Caco-2 (cell line): ENCODE measurements at regions of chr6 and their contacts with region 1.

Region 1: DNA sequence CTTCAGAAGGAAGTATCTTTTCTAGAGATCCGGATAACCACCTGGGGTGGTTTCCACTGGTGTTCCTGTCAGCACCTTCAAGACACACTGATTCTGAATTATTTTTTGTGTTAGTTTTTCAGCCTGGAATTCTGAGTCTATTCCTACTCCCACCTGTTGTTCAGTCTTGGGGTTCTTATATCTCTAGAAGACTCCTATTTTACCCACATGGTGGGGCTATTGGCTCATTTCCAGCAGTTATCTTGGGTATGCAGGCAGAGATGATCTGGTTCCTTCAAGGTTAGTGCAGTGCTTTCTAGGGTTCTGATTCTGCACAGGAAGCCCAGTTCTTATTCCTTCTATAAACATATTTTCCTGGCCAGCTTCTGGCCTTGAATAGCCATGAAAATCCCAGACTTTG is 175.6 kb upstream of the PDE7B start:
- DNase-seq: peak in 1 of 2 experiments; percentile 62
- H3K4me3 ChIP-seq: no peak overlapping the region
- H3K4me3 Mint-ChIP-seq: no peak overlapping the region
- H3K27ac Mint-ChIP-seq: no peak overlapping the region
- H3K4me1 ChIP-seq: no peaks in the 10 kb centered on the region
- H3K4me1 Mint-ChIP-seq: no peaks in the 10 kb centered on the region
- H3K27me3 ChIP-seq: no peaks in the 10 kb centered on the region
- H3K27me3 Mint-ChIP-seq: no peaks in the 10 kb centered on the region
- CTCF ChIP-seq: peak; percentile 54 to 65

Region 2: DNA sequence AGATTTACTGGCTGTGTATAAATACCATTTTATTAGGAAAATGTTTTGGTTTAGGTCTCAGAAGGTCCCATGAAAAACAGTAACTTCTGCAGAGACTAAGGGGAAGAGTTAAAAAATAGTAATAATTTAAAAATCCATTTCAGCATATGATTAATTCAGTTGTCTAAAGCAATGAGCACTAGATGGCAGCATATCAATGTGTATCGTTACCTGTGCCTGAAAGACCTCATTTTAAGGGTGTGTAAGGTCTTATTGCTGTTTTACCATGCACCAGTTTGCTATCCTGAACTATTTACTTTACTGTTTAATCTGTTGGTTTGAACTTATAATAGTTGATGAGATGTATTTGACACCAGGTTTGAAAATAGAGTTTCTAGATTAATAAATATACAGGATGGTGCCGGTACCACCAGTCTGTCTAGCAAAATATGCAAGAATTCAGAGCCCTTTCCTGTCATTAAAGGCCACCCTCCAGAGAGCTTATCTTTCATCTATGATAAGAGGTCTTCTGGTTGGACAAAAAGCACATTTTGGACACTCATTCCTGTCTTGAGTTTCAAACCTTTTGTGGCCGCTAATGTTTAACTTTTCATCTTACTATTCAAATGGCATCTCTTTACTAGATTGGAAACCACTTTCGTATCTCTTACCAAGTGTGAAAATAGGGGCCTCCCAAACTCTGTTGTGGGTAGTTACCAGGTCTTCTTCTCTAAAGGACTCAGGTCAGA is 169.4 kb before region 1 on chr6:
- CTCF ChIA-PET with region 1: no interaction called
- POLR2A ChIA-PET with region 1: no interaction called
- intact Hi-C with region 1: loop called (anchors 2 kb)
- DNase-seq: peak in 1 of 2 experiments; percentile 35
- H3K4me3 ChIP-seq: no peak overlapping the region
- H3K4me3 Mint-ChIP-seq: peak overlapping the region; percentile 9
- H3K27ac Mint-ChIP-seq: peak overlapping the region; percentile 65
- H3K4me1 ChIP-seq: peaks cover 24% of the 10 kb centered on the region
- H3K4me1 Mint-ChIP-seq: peaks cover 18% of the 10 kb centered on the region
- H3K27me3 ChIP-seq: no peaks in the 10 kb centered on the region
- H3K27me3 Mint-ChIP-seq: no peaks in the 10 kb centered on the region
- CTCF ChIP-seq: peak; percentile 19 to 57

Region 3: GRCh38 chr6:135759831-135760230 is 84.0 kb after region 1 on chr6:
- CTCF ChIA-PET with region 1: interaction called, 3 read pairs
- POLR2A ChIA-PET with region 1: no interaction called
- intact Hi-C with region 1: loop called (anchors 1 kb)
- DNase-seq: peak in 1 of 2 experiments; percentile 21
- H3K4me3 ChIP-seq: no peak overlapping the region
- H3K4me3 Mint-ChIP-seq: no peak overlapping the region
- H3K27ac Mint-ChIP-seq: no peak overlapping the region
- H3K4me1 ChIP-seq: no peaks in the 10 kb centered on the region
- H3K4me1 Mint-ChIP-seq: no peaks in the 10 kb centered on the region
- H3K27me3 ChIP-seq: no peaks in the 10 kb centered on the region
- H3K27me3 Mint-ChIP-seq: peaks cover under 1% of the 10 kb centered on the region
- CTCF ChIP-seq: peak in 1 of 2 experiments; percentile 31

Region 4: GRCh38 chr6:135909737-135910387 is 234.0 kb after region 1 on chr6:
- CTCF ChIA-PET with region 1: interaction called, 5 read pairs
- POLR2A ChIA-PET with region 1: no interaction called
- intact Hi-C with region 1: loop called (anchors 1 kb)
- DNase-seq: peak; percentile 62 to 63
- H3K4me3 ChIP-seq: no peak overlapping the region
- H3K4me3 Mint-ChIP-seq: no peak overlapping the region
- H3K27ac Mint-ChIP-seq: no peak overlapping the region
- H3K4me1 ChIP-seq: no peaks in the 10 kb centered on the region
- H3K4me1 Mint-ChIP-seq: peaks cover 9% of the 10 kb centered on the region
- H3K27me3 ChIP-seq: no peaks in the 10 kb centered on the region
- H3K27me3 Mint-ChIP-seq: peaks cover 3% of the 10 kb centered on the region
- CTCF ChIP-seq: peak; percentile 28 to 59

Region 5: DNA sequence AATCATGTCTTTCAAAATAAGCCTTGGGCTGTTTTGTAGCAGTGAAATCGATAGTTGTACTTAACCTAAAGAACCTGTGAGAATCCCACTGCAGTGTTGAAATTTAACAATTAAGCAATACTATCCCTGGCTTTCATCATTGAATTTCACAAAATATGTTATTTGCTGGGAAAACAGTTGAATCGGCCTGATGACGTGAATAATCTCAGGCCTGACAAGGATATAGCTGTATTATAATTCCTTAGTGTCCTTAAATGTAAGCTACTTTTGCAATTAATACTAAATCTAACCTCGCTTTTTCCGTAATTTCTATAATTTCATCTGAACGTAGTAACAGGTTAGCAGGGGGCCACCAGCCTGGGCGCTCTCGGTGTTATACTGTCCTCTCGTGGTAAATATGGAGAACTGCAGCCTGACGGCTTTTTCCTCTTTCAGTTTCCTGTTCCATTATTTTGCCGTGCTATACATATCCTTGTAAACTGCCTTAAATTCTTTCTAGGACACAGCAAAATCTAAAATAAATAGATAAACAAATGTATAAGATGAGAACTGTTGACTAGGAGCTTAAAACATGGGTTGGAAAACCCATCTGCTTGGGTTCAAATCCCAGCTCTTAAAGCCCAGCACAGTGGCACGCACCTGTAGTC is 550.3 kb after region 1 on chr6:
- CTCF ChIA-PET with region 1: interaction called, 3 read pairs
- POLR2A ChIA-PET with region 1: no interaction called
- intact Hi-C with region 1: loop called (anchors 1 kb)
- DNase-seq: peak in 1 of 2 experiments; percentile 56
- H3K4me3 ChIP-seq: no peak overlapping the region
- H3K4me3 Mint-ChIP-seq: no peak overlapping the region
- H3K27ac Mint-ChIP-seq: no peak overlapping the region
- H3K4me1 ChIP-seq: peaks cover 18% of the 10 kb centered on the region
- H3K4me1 Mint-ChIP-seq: peaks cover 16% of the 10 kb centered on the region
- H3K27me3 ChIP-seq: no peaks in the 10 kb centered on the region
- H3K27me3 Mint-ChIP-seq: peaks cover 5% of the 10 kb centered on the region
- CTCF ChIP-seq: peak; percentile 99